WTC11 (cell line): ENCODE measurements at regions of chr11 and their contacts with region 1.

Region 1: DNA sequence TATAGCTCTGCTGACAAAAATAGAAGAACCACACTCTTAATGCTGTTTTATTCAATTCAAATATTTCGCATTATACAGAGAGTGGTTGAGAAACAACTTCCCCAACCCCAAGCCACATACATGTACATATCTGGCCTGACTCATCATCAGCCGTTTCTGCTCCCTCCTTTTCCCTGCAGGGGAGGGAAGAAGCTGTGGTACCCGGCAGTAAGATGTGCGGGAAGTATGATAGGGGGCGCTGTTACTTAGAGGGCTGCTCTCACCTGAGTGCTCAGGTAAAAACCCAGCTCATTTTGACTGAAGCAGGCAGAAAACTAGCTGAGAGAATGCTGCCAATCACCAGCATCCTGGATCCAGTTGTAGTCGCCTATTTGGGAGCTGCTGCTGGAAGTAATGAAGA is 85.5 kb downstream of the NELL1 start:
- DNase-seq: peak; percentile 52
- ATAC-seq: peak; percentile 99
- H3K4me3 Mint-ChIP-seq: no peak overlapping the region
- H3K27ac Mint-ChIP-seq: no peak overlapping the region
- H3K4me1 Mint-ChIP-seq: no peaks in the 10 kb centered on the region
- H3K27me3 Mint-ChIP-seq: no peaks in the 10 kb centered on the region
- CTCF ChIP-seq: peak; percentile 72

Region 2: GRCh38 chr11:20671856-20672546 is 82.9 kb before region 1 on chr11:
- CTCF ChIA-PET with region 1: interaction called, 15 read pairs
- POLR2A ChIA-PET with region 1: no interaction called
- DNase-seq: no peak
- ATAC-seq: peak; percentile 9; the same call in 1 of the 2 replicates
- H3K4me3 Mint-ChIP-seq: peak overlapping the region; percentile 82
- H3K27ac Mint-ChIP-seq: no peak overlapping the region
- H3K4me1 Mint-ChIP-seq: peaks cover 43% of the 10 kb centered on the region
- H3K27me3 Mint-ChIP-seq: peaks cover 58% of the 10 kb centered on the region
- CTCF ChIP-seq: no peak

Region 3: DNA sequence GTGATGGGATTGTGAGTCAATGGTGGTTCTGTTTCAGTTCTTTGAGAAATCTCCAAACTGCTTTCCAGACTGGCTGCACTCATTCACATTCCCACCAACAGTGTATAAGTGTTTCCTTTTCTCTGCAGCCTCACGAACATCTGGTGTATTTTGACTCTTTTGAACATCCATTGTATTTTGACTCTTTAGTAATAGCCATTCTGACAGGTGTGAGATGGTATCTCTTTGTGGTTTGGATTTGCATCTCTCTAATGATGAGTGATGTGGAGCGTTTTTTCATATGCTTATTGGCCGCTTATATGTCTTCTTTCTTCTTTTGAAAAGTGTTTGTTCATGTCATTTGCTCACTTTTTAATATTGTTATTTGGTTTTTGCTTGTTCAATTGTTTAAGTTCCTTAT is 66.2 kb before region 1 on chr11:
- CTCF ChIA-PET with region 1: no interaction called
- POLR2A ChIA-PET with region 1: no interaction called
- DNase-seq: no peak
- ATAC-seq: no peak
- H3K4me3 Mint-ChIP-seq: no peak overlapping the region
- H3K27ac Mint-ChIP-seq: no peak overlapping the region
- H3K4me1 Mint-ChIP-seq: no peaks in the 10 kb centered on the region
- H3K27me3 Mint-ChIP-seq: no peaks in the 10 kb centered on the region; the same call in 1 of the 2 replicates
- CTCF ChIP-seq: no peak

Region 4: DNA sequence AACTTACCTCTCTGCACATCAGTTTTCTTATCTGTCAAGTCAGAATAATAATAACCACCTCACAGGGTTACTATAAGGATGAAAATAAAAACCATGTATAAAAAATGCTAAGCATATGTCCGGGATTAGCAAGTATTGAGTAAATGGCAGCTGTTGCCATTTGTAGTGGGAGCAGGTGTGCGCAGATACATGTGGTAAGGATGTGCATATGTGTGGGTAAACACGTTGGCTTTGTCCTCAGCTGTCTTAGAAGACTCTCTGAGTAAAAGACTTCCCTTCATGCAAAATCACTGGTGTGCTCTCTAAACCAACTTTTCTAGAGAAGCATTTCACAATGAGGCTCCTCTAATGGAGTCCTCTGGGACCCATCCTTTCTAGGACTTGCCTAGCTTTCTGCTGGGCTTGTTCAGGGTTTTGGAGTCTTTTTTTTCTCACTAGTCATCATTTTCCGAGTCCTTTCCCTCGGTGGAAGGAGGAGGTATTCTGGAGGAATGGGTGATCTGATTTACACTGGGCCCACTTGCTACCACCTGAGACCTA is 23.2 kb before region 1 on chr11:
- CTCF ChIA-PET with region 1: interaction called, 13 read pairs
- POLR2A ChIA-PET with region 1: no interaction called
- DNase-seq: no peak
- ATAC-seq: no peak
- H3K4me3 Mint-ChIP-seq: no peak overlapping the region
- H3K27ac Mint-ChIP-seq: no peak overlapping the region
- H3K4me1 Mint-ChIP-seq: no peaks in the 10 kb centered on the region
- H3K27me3 Mint-ChIP-seq: no peaks in the 10 kb centered on the region
- CTCF ChIP-seq: no peak

Region 5: DNA sequence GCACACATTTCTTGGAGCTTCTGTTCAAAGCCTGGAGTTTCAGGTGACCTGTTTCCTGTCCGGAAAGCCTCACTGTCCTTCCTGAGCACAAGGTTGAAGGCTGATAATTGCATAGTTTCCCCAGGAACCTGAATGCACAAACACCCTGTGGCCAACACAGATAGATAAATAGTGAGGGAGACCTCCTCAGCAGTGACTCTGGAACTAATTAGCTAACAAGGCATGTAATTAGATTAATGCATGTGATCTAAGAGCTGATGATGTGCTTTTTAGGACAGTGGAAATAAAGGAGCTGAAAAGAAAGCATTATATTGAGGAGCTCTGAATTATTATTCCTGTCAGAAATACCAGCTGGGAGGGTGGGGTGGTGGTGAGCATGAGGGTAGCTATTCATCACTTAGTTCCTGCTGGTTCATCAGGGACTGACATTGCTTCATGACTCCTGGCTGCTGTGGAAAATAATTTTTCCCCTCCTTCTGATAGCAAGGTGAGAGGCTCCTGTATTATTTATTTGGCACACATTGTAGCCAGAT is 15.5 kb after region 1 on chr11:
- CTCF ChIA-PET with region 1: interaction called, 15 read pairs
- POLR2A ChIA-PET with region 1: interaction called, 4 read pairs
- DNase-seq: no peak
- ATAC-seq: no peak
- H3K4me3 Mint-ChIP-seq: no peak overlapping the region
- H3K27ac Mint-ChIP-seq: no peak overlapping the region
- H3K4me1 Mint-ChIP-seq: peaks cover 4% of the 10 kb centered on the region; the same call in 1 of the 2 replicates
- H3K27me3 Mint-ChIP-seq: no peaks in the 10 kb centered on the region
- CTCF ChIP-seq: no peak

Region 6: DNA sequence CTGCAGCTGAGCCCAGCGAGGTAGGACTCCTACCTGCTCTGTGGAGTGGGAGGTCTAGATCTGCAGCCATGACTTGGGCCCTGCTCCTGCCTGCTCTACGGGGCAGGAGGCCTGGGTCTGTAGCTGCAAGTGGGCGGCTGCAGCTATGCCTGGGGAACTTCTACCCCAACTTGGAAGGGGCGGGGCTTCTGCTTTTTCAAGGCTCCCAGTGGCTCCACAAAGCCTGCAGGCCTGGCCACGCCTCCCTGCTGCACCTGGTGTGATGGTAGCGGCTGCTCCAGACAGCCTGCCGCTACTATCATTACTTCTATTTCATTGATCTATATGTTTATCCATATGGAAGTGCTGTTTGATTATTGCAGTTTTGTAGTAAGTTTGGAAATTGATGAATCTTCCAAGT is 35.7 kb after region 1 on chr11:
- CTCF ChIA-PET with region 1: interaction called, 12 read pairs
- POLR2A ChIA-PET with region 1: no interaction called
- DNase-seq: peak; percentile 82
- ATAC-seq: peak; percentile 99
- H3K4me3 Mint-ChIP-seq: no peak overlapping the region
- H3K27ac Mint-ChIP-seq: no peak overlapping the region
- H3K4me1 Mint-ChIP-seq: peaks cover 3% of the 10 kb centered on the region
- H3K27me3 Mint-ChIP-seq: no peaks in the 10 kb centered on the region
- CTCF ChIP-seq: no peak

Region 7: GRCh38 chr11:20821046-20821445 is 66.1 kb after region 1 on chr11:
- CTCF ChIA-PET with region 1: no interaction called
- POLR2A ChIA-PET with region 1: no interaction called
- DNase-seq: no peak
- ATAC-seq: no peak
- H3K4me3 Mint-ChIP-seq: no peak overlapping the region
- H3K27ac Mint-ChIP-seq: no peak overlapping the region
- H3K4me1 Mint-ChIP-seq: peaks cover 12% of the 10 kb centered on the region; the same call in 1 of the 2 replicates
- H3K27me3 Mint-ChIP-seq: no peaks in the 10 kb centered on the region
- CTCF ChIP-seq: no peak